ENCODE measurements at regions of chr15 and their contacts with region 1.

Region 1: DNA sequence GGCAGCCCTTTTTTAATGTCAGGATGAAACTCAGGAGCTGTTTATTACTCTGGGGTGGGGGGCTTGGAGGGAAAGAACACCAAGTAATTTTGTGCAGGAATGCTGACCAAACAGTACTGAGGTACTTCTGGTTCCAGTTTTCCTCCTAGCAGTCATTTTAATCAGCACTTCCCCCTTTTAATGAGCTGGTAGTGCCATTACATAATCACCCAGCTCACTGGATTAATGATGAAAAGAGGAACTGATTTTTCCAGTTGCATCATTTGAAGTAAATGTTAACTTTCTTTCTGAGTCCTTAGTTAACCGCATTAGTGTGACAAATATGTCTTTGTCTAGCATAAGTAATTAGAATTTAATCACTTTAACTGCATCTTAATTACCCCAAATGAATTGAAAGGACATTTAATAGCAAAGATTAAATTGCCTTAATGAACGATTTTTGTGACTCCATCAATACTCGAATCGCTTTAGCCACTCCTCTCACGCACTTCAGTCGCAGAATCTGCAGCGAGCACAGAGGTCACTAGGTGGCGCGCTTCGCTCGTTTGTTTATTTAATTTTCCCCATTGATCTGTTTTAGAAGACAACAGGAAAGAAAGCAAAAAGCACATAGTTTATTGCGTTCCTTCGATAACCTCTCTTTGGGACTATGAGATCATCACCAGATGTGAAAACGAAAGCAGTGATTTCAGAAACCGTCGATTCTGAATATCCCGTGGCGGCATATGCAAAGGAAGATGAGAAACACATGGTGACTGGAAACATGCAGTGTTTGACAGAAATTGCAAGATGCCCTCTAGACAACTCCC is 9.8 kb downstream of the ONECUT1 start:
- DNase-seq: peak; percentile 70
- ATAC-seq: peak; percentile 73
- H3K4me3 ChIP-seq: peak overlapping the region; percentile 5
- H3K27ac ChIP-seq: no peak overlapping the region
- H3K4me1 ChIP-seq: peaks cover 27% of the 10 kb centered on the region
- H3K27me3 ChIP-seq: peaks cover 87% of the 10 kb centered on the region
- CTCF ChIP-seq: peak; percentile 77

Region 2: DNA sequence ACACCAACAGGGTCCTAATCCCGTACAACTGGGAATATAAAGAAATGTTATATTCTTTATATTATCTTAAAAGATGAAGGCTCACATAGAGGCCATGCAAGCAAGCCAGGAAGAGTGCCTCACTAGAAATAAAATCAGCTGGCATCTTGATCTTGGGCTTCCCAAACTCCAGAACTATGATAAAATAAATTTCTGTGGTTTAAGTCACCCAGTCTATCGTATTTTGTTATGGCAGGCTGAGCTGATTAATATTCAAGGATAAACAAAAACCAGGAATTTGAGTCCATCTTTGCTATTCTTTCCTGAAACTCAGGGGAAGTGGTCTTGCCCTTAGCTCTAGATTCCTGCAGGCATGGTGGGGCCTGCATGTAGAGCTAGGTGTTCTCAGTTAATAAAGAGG is 143.9 kb before region 1 on chr15:
- intact Hi-C with region 1: no loop called
- DNase-seq: no peak
- ATAC-seq: no peak
- H3K4me3 ChIP-seq: no peak overlapping the region
- H3K27ac ChIP-seq: no peak overlapping the region
- H3K4me1 ChIP-seq: peaks cover under 1% of the 10 kb centered on the region
- H3K27me3 ChIP-seq: no peaks in the 10 kb centered on the region
- CTCF ChIP-seq: no peak

Region 3: DNA sequence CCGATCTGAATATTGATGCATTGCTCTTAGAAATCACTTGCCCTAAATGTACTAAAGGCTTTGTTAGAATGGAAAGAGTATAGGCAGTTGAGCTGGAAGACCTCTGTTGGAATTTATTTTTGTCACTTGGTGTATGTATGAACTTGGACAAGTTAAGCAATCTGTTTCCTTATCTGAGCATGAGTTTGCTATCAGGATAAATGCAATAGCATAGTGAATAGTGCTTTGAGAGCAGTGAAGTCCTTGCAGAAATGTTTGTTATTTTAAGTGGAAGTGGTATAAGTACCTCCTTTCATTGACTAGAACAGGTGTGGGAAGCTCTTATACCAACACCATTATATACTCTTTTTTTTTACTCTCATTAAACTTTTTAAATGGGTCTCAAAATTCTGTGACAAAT is 156.1 kb after region 1 on chr15:
- intact Hi-C with region 1: no loop called
- DNase-seq: no peak
- ATAC-seq: peak; percentile 33 to 65
- H3K4me3 ChIP-seq: no peak overlapping the region
- H3K27ac ChIP-seq: no peak overlapping the region
- H3K4me1 ChIP-seq: no peaks in the 10 kb centered on the region
- H3K27me3 ChIP-seq: peaks cover 9% of the 10 kb centered on the region
- CTCF ChIP-seq: no peak

Region 4: GRCh38 chr15:53197426-53197839 is 417.1 kb after region 1 on chr15:
- intact Hi-C with region 1: loop called (anchors 5 kb)
- DNase-seq: peak; percentile 63
- ATAC-seq: peak; percentile 81 to 87
- H3K4me3 ChIP-seq: no peak overlapping the region
- H3K27ac ChIP-seq: no peak overlapping the region
- H3K4me1 ChIP-seq: no peaks in the 10 kb centered on the region
- H3K27me3 ChIP-seq: peaks cover 11% of the 10 kb centered on the region
- CTCF ChIP-seq: peak; percentile 78